Activated CD4-positive, alpha-beta T cell treated with anti-CD3 and anti-CD28 coated beads, Interleukin-2, amount 10 ng/mL, durations not matched to agents 24 days and 14 days (primary cell): ENCODE measurements at regions of chr19 and their contacts with region 1.

Region 1: GRCh38 chr19:11422163-11423021 is 3.3 kb upstream of the RGL3 start:
- DNase-seq: peak; percentile 92
- H3K4me3 Mint-ChIP-seq: peak overlapping the region; percentile 82
- H3K27ac Mint-ChIP-seq: peak overlapping the region; percentile 60
- H3K4me1 Mint-ChIP-seq: peaks cover 33% of the 10 kb centered on the region
- H3K27me3 Mint-ChIP-seq: peaks cover 61% of the 10 kb centered on the region

Region 2: GRCh38 chr19:11373166-11373884 is 49.1 kb before region 1 on chr19:
- intact Hi-C with region 1: no loop called
- DNase-seq: no peak
- H3K4me3 Mint-ChIP-seq: no peak overlapping the region
- H3K27ac Mint-ChIP-seq: peak overlapping the region; percentile 29
- H3K4me1 Mint-ChIP-seq: peaks cover 23% of the 10 kb centered on the region
- H3K27me3 Mint-ChIP-seq: no peaks in the 10 kb centered on the region

Region 3: DNA sequence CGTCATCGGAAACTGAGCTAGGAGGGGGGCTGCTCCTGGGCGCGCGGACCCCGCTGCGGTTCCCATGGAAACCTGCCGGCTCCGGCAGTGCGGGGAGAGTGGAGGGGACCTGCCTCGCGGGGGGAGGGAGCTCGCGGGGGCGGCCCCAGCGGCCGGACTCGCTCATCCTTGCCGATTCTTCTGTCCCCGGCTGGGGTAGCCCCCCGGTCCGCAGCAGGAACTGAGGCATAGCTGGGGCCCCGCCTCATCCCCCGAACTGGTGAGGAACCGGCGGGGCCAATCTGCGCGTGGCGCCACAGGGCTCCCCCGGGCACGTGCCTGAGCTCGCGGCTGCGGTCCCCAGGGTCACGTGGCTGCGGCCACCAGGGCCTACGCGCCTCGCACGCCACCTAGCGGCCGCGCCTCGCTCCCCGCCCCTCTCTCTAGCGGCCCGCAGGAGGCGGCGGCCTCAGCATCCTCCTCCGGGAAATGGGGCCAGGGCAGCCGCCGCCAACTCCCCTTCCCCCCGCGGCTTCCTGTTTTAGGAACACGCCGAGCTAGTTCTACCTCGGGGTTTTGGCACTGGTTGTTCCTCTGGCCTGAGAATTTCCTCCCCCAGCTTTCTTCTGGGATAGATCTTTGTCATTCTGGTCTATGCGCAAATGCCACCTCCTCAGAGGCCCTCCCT is 60.1 kb after region 1 on chr19:
- intact Hi-C with region 1: loop called (anchors 5 kb)
- DNase-seq: peak; percentile 96
- H3K4me3 Mint-ChIP-seq: peak overlapping the region; percentile 84
- H3K27ac Mint-ChIP-seq: peak overlapping the region; percentile 90
- H3K4me1 Mint-ChIP-seq: peaks cover 18% of the 10 kb centered on the region
- H3K27me3 Mint-ChIP-seq: peaks cover 29% of the 10 kb centered on the region